ENCODE measurements at regions of chr7 and their contacts with region 1.

Region 1: DNA sequence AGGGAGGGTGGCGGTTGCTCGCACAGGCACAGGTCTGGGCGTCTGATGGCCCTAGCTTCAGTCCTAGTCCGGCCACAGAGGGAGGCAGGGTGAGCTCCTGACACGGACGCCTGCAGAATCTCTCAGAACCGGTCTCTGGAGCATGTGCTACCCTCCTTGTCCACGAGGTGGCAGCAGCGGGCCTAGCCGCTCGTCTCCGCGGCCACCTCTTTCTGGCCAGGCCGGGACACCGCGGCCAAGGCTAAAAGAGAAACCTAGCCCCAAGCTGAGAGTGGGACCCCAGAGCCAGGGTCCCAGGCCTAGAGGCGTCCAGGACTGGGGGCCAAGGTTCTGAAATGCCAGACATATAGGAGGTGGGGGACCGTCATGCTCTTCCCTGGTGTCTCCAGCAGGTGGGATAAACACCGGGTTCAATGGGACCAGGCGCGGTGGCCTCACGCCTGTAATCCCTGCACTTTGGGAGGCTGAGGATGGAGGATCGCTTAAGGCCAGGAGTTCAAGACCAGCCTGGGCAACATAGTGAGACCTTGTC is 3.2 kb upstream of the LAT2 start:
- DNase-seq: peak; percentile 80
- H3K4me3 Mint-ChIP-seq: no peak overlapping the region
- H3K27ac Mint-ChIP-seq: no peak overlapping the region
- H3K4me1 Mint-ChIP-seq: peaks cover 10% of the 10 kb centered on the region
- H3K27me3 Mint-ChIP-seq: no peaks in the 10 kb centered on the region
- CTCF ChIP-seq: peak; percentile 97

Region 2: GRCh38 chr7:73865738-73866445 is 340.8 kb before region 1 on chr7:
- CTCF ChIA-PET with region 1: interaction called, 6 read pairs
- POLR2A ChIA-PET with region 1: no interaction called
- intact Hi-C with region 1: loop called (anchors 1 kb)
- DNase-seq: peak; percentile 68
- H3K4me3 Mint-ChIP-seq: no peak overlapping the region
- H3K27ac Mint-ChIP-seq: no peak overlapping the region
- H3K4me1 Mint-ChIP-seq: no peaks in the 10 kb centered on the region
- H3K27me3 Mint-ChIP-seq: no peaks in the 10 kb centered on the region
- CTCF ChIP-seq: peak; percentile 77

Region 3: GRCh38 chr7:73921623-73922528 is 284.8 kb before region 1 on chr7:
- CTCF ChIA-PET with region 1: no interaction called
- POLR2A ChIA-PET with region 1: no interaction called
- intact Hi-C with region 1: no loop called
- DNase-seq: no peak
- H3K4me3 Mint-ChIP-seq: no peak overlapping the region
- H3K27ac Mint-ChIP-seq: no peak overlapping the region
- H3K4me1 Mint-ChIP-seq: no peaks in the 10 kb centered on the region
- H3K27me3 Mint-ChIP-seq: peaks cover 63% of the 10 kb centered on the region
- CTCF ChIP-seq: no peak

Region 4: GRCh38 chr7:74173866-74174605 is 32.6 kb before region 1 on chr7 and contains the start of gene EIF4H:
- CTCF ChIA-PET with region 1: interaction called, 10 read pairs
- POLR2A ChIA-PET with region 1: interaction called, 3 read pairs
- intact Hi-C with region 1: no loop called
- DNase-seq: peak; percentile 89
- H3K4me3 Mint-ChIP-seq: peak within 1 kb of the TSS; percentile 87
- H3K27ac Mint-ChIP-seq: peak within 1 kb of the TSS; percentile 92
- H3K4me1 Mint-ChIP-seq: peaks cover 29% of the 10 kb centered on the region
- H3K27me3 Mint-ChIP-seq: no peaks in the 10 kb centered on the region
- CTCF ChIP-seq: no peak
- total RNA-seq, gene EIF4H: 365 and 420 TPM in 2 replicates

Region 5: GRCh38 chr7:74193054-74193453 is 13.6 kb before region 1 on chr7:
- CTCF ChIA-PET with region 1: interaction called, 23 read pairs
- POLR2A ChIA-PET with region 1: no interaction called
- intact Hi-C with region 1: no loop called
- DNase-seq: no peak
- H3K4me3 Mint-ChIP-seq: no peak overlapping the region
- H3K27ac Mint-ChIP-seq: no peak overlapping the region
- H3K4me1 Mint-ChIP-seq: peaks cover 3% of the 10 kb centered on the region
- H3K27me3 Mint-ChIP-seq: no peaks in the 10 kb centered on the region
- CTCF ChIP-seq: no peak

Region 6: GRCh38 chr7:74254129-74254857 is 47.6 kb after region 1 on chr7 and contains the start of gene RFC2:
- CTCF ChIA-PET with region 1: interaction called, 24 read pairs
- POLR2A ChIA-PET with region 1: no interaction called
- intact Hi-C with region 1: loop called (anchors 1 kb)
- DNase-seq: peak; percentile 93
- H3K4me3 Mint-ChIP-seq: peak within 1 kb of the TSS; percentile 97
- H3K27ac Mint-ChIP-seq: peak within 1 kb of the TSS; percentile 99
- H3K4me1 Mint-ChIP-seq: no peaks in the 10 kb centered on the region
- H3K27me3 Mint-ChIP-seq: no peaks in the 10 kb centered on the region
- CTCF ChIP-seq: no peak
- total RNA-seq, gene RFC2: 16.3 and 35.0 TPM in 2 replicates

Region 7: GRCh38 chr7:74324531-74325209 is 118.0 kb after region 1 on chr7:
- CTCF ChIA-PET with region 1: no interaction called
- POLR2A ChIA-PET with region 1: no interaction called
- intact Hi-C with region 1: no loop called
- DNase-seq: no peak
- H3K4me3 Mint-ChIP-seq: no peak overlapping the region
- H3K27ac Mint-ChIP-seq: no peak overlapping the region
- H3K4me1 Mint-ChIP-seq: peaks cover 6% of the 10 kb centered on the region
- H3K27me3 Mint-ChIP-seq: no peaks in the 10 kb centered on the region
- CTCF ChIP-seq: no peak

Region 8: GRCh38 chr7:74379938-74380337 is 173.3 kb after region 1 on chr7:
- CTCF ChIA-PET with region 1: interaction called, 50 read pairs
- POLR2A ChIA-PET with region 1: interaction called, 3 read pairs
- intact Hi-C with region 1: no loop called
- DNase-seq: no peak
- H3K4me3 Mint-ChIP-seq: no peak overlapping the region
- H3K27ac Mint-ChIP-seq: no peak overlapping the region
- H3K4me1 Mint-ChIP-seq: no peaks in the 10 kb centered on the region
- H3K27me3 Mint-ChIP-seq: no peaks in the 10 kb centered on the region
- CTCF ChIP-seq: no peak

Region 9: GRCh38 chr7:74395745-74396311 is 189.2 kb after region 1 on chr7:
- CTCF ChIA-PET with region 1: interaction called, 217 read pairs
- POLR2A ChIA-PET with region 1: interaction called, 8 read pairs
- intact Hi-C with region 1: loop called (anchors 1 kb)
- DNase-seq: no peak
- H3K4me3 Mint-ChIP-seq: no peak overlapping the region
- H3K27ac Mint-ChIP-seq: no peak overlapping the region
- H3K4me1 Mint-ChIP-seq: peaks cover 12% of the 10 kb centered on the region
- H3K27me3 Mint-ChIP-seq: no peaks in the 10 kb centered on the region
- CTCF ChIP-seq: no peak

Measured in MCF 10A (cell line).